ENCODE measurements at regions of chr19 and their contacts with region 1.

Region 1: DNA sequence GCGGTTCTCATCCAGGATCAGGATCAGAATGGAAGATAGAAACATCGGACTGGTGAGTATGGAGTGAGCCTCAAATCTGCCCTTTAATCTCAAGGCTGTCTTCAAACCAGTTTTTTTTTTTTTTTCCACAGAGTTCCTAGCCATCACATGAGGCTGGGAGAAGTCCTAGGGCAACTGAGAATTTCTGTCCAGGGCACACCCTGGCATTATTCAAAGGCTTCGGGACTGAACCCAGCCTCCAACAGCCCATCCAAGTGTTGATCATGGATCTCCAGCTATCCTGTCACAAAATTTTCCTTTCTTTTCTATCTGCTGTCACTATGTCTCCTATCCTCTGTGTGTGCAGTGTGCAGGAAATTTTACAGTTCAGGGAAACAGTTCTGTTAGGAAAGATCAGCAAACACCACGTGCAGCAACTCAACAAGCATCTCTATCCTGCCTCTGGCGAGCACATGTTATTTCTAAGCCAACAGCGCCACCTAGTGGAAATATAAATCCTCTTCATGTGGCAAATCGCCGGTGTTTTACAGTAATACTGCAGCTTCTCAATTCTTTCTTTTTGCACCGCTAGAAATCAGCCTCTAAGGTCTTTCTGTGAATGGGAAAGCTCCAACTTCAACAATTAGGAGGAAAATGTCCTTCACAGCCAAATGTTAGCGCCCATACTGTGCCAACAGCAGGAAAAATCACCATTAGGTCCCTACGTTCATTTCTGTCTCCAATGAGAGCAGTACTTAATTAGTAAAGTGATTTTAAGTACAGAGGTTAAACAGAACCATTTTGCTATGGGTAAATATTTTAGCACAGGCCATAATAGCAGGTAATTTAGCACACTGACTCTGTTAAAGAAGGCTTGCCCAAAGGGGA is 21.4 kb upstream of the ZNF181 start:
- DNase-seq: peak; percentile 82
- ATAC-seq: peak; percentile 89
- H3K4me3 ChIP-seq: no peak overlapping the region
- H3K27ac ChIP-seq: no peak overlapping the region
- H3K4me1 ChIP-seq: no peaks in the 10 kb centered on the region
- H3K27me3 ChIP-seq: no peaks in the 10 kb centered on the region
- CTCF ChIP-seq: peak; percentile 81
- POLR2A ChIP-seq: no peak
- RAD21 ChIP-seq: peak; percentile 86

Region 2: DNA sequence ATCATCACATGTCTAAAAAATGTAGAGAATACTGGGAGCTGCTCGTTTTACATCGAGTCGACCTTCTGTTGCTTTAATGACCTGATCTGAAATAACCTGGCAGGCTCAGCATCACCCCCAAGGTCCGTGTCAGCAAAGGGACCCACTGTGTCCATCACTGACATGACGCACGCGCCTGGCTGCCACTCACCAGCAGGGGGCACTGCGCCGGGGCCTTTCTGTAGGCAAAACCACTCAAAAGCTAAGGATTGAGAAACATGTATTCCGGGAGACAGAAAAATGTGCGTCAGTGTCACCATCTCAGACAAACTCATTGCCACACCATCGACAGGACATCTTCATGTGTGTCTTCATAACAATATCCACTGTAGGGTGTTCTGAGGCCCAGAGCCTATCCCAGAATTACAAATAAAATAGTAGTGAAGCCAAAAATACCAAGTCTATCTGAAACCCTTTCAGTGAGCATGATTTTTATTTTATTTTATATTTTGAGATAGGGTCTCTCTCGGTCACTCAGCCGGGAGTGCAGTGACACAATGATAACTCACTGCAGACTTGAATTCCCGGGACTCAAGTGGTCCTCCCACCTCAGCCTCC is 670.6 kb before region 1 on chr19:
- CTCF ChIA-PET with region 1: no interaction called
- POLR2A ChIA-PET with region 1: no interaction called
- dilution Hi-C with region 1: no loop called
- in situ Hi-C with region 1: no loop called
- intact Hi-C with region 1: loop called (anchors 2 kb)
- DNase-seq: peak; percentile 33
- ATAC-seq: peak; percentile 83
- H3K4me3 ChIP-seq: no peak overlapping the region
- H3K27ac ChIP-seq: no peak overlapping the region
- H3K4me1 ChIP-seq: no peaks in the 10 kb centered on the region
- H3K27me3 ChIP-seq: no peaks in the 10 kb centered on the region; the same call in 1 of the 2 replicates
- CTCF ChIP-seq: peak; percentile 76
- POLR2A ChIP-seq: no peak
- RAD21 ChIP-seq: peak; percentile 60

Region 3: GRCh38 chr19:34345947-34346351 is 366.7 kb before region 1 on chr19:
- CTCF ChIA-PET with region 1: no interaction called
- POLR2A ChIA-PET with region 1: no interaction called
- dilution Hi-C with region 1: no loop called
- in situ Hi-C with region 1: no loop called
- intact Hi-C with region 1: loop called (anchors 5 kb)
- DNase-seq: peak; percentile 63
- ATAC-seq: peak; percentile 97
- H3K4me3 ChIP-seq: no peak overlapping the region
- H3K27ac ChIP-seq: no peak overlapping the region
- H3K4me1 ChIP-seq: no peaks in the 10 kb centered on the region
- H3K27me3 ChIP-seq: no peaks in the 10 kb centered on the region
- CTCF ChIP-seq: peak; percentile 83
- POLR2A ChIP-seq: no peak
- RAD21 ChIP-seq: peak; percentile 79

Region 4: DNA sequence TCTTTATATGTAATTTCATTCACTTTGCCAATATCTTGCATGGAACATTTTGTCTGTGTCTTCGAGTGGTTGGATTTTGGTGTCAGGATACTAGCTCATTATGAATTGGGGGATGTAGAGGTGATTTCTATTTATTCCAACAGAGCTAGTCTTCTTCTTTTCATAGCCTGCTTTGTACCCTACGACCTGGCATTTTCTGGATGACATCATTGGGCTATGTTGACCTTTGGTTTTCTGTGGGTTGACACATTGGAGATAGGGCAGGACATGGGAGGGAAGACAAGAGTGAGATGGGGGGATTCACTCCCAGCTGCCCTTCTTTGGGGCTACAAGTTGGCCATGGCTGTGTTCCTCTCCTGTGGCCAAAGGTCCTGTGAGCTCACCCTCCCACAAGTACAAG is 193.0 kb before region 1 on chr19:
- CTCF ChIA-PET with region 1: interaction called, 3 read pairs
- POLR2A ChIA-PET with region 1: no interaction called
- dilution Hi-C with region 1: no loop called
- in situ Hi-C with region 1: no loop called
- intact Hi-C with region 1: loop called (anchors 5 kb)
- DNase-seq: no peak
- ATAC-seq: no peak
- H3K4me3 ChIP-seq: no peak overlapping the region
- H3K27ac ChIP-seq: no peak overlapping the region
- H3K4me1 ChIP-seq: no peaks in the 10 kb centered on the region
- H3K27me3 ChIP-seq: peaks cover 8% of the 10 kb centered on the region; the same call in 1 of the 2 replicates
- CTCF ChIP-seq: no peak
- POLR2A ChIP-seq: no peak
- RAD21 ChIP-seq: no peak

Region 5: DNA sequence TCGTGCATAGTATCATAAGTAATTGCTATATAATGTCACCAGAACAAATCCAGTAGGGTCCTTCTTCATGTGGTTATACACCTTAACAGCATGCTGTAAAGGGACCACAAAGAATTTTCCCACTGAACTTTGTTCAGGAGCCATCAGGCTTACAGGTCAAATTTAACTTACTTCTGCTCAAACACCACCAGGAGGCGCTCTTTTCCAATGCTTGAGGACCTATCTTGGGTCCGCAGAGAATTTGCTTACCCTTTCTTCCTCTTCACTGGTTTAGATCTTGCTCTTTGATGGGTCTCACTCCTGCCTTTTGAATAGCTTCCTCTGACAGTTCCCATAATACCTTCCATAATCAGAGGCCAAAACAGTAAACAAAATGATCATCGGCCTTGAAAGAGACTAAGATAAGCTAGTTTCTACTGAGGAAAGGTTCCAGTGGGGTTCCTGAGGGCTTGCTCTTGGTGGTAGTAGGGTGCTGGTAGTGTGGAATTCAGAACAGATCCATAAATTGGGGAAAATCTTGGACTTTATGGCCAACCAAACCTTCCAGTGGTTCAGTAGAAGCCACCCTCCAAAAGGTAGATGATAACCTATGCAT is 73.0 kb before region 1 on chr19:
- CTCF ChIA-PET with region 1: interaction called, 6 read pairs
- POLR2A ChIA-PET with region 1: no interaction called
- dilution Hi-C with region 1: no loop called
- in situ Hi-C with region 1: loop called (anchors 5 kb)
- intact Hi-C with region 1: loop called (anchors 1 kb)
- DNase-seq: peak; percentile 72
- ATAC-seq: peak; percentile 64
- H3K4me3 ChIP-seq: no peak overlapping the region
- H3K27ac ChIP-seq: no peak overlapping the region
- H3K4me1 ChIP-seq: no peaks in the 10 kb centered on the region
- H3K27me3 ChIP-seq: no peaks in the 10 kb centered on the region
- CTCF ChIP-seq: peak; percentile 75
- POLR2A ChIP-seq: no peak
- RAD21 ChIP-seq: peak; percentile 76

Measured in IMR-90 (cell line).